Dendritic cell treated with granulocyte-macrophage colony-stimulating factor and Interleukin-4, amounts not matched to agents 40 ng/mL and 50 ng/mL, for 4 days (primary cell): ENCODE measurements at regions of chr19 and their contacts with region 1.

Region 1: GRCh38 chr19:50383852-50384684 is at the start of gene POLD1:
- H3K4me3 Mint-ChIP-seq: peak within 1 kb of the TSS; percentile 87
- H3K27ac Mint-ChIP-seq: peak within 1 kb of the TSS; percentile 94
- H3K4me1 Mint-ChIP-seq: peaks cover 78% of the 10 kb centered on the region
- H3K27me3 Mint-ChIP-seq: no peaks in the 10 kb centered on the region

Region 2: DNA sequence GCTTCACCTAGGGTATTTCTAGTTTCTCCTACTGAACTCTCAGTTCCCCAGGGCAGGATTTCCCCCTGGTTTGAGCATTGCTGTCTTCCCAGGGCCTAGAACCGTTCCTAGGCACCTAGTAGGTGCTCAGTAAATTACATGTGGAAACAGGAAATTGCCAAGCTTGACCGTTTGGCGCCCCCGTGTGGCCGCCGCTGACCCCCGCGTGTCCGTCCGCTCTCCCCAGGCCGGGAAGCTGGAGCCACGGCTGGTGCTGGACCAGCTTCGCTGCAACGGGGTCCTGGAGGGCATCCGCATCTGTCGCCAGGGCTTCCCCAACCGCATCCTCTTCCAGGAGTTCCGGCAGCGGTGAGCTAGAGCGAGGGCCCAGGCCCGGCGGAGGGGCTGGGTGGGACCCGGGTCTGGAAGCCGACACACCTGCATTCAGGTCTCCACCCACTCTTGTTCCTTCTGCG is 125.1 kb before region 1 on chr19:
- intact Hi-C with region 1: no loop called
- H3K4me3 Mint-ChIP-seq: no peak overlapping the region
- H3K27ac Mint-ChIP-seq: no peak overlapping the region
- H3K4me1 Mint-ChIP-seq: no peaks in the 10 kb centered on the region
- H3K27me3 Mint-ChIP-seq: no peaks in the 10 kb centered on the region

Region 3: DNA sequence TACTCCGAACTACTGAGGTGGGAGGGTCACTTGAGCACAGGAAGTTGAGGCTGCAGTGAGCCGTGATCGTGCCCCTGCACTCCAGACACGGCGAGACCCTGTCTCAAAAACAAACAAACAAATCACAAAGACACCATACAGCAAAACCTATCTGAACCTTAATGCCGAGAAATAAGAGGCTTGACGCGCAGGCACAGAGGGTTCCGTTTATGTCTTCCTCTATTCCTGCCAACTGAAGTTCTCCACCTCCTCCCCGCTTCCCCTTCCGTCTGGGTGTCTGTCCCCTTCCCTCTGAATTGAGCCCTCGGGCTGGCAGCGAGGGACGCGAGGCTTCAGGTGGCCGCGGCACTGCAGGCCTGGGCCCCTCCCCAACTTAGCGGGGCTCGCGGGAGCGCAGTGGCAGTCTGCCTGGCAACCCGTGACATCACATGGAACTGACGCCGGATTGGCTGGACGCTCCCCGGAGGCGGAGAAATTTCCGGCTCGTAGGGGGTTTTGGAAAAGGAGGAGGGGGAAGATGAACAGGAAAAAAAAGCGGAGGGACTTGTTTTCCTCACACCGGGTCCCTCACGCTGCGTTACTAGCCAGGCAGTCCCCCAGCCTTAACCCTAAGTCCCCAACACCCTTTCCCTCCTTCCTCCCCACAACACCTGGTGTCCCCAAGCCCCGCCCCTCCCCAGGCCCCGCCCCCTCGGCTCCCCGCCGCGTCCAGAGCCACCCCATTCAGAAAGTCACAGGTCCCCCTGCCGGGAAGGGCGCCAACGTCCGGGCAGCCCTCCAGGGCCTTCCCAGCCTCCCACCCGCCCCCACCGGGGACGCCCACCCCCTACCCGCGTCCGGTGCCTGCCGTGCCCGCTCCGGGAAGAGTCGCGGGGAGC is 47.5 kb after region 1 on chr19:
- intact Hi-C with region 1: loop called (anchors 1 kb)
- H3K4me3 Mint-ChIP-seq: peak overlapping the region; percentile 80
- H3K27ac Mint-ChIP-seq: peak overlapping the region; percentile 99
- H3K4me1 Mint-ChIP-seq: peaks cover 59% of the 10 kb centered on the region
- H3K27me3 Mint-ChIP-seq: peaks cover 29% of the 10 kb centered on the region